ENCODE measurements at regions of chr16 and their contacts with region 1.

Region 1: DNA sequence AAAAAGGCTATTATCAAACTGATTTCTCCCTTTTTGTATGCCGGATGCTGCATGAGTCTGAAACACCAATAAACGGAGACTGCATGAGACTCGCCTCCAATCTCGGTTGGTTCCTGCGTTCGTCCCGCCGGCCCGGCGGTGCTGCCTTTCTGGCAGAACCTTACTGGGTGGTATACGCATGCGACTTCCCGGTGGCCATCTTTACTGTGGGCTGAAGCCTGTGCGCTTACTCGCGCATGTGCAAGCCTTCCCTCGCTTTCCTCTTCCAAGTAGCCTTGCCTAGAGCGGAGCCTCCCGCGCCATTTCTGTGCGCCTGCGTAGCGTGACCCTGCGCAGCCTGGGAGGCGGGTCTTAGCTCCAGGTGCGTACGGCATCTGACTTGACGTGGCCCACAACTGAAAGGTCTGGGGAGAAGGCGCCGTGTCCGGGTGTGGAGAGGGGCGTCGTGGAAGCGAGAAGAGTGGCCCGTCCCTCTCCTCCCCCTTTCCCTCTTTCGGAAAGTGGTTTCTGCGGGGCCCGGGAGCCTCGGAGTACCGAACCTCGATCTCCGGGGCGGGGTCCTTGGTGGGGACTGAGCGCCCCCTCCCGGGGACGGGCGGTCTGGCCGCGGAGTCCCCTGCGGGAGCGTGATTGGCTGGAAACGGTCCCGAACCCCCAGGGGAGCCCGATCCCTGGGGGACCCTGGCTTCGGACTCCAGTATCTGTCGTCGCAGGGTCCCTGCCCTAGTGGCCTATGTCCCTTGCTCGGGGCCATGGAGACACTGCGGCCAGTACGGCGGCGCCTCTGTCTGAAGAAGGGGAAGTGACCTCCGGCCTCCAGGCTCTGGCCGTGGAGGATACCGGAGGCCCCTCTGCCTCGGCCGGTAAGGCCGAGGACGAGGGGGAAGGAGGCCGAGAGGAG is at the start of gene PAGR1:
- DNase-seq: peak; percentile 97
- ATAC-seq: peak; percentile 74
- H3K4me3 Mint-ChIP-seq: peak within 1 kb of the TSS; percentile 99
- H3K27ac Mint-ChIP-seq: peak within 1 kb of the TSS; percentile 99
- H3K4me1 Mint-ChIP-seq: peaks cover 71% of the 10 kb centered on the region
- H3K27me3 Mint-ChIP-seq: no peaks in the 10 kb centered on the region
- CTCF ChIP-seq: peak; percentile 89
- total RNA-seq, gene PAGR1: 18.6 and 20.3 TPM in 2 replicates

Region 2: DNA sequence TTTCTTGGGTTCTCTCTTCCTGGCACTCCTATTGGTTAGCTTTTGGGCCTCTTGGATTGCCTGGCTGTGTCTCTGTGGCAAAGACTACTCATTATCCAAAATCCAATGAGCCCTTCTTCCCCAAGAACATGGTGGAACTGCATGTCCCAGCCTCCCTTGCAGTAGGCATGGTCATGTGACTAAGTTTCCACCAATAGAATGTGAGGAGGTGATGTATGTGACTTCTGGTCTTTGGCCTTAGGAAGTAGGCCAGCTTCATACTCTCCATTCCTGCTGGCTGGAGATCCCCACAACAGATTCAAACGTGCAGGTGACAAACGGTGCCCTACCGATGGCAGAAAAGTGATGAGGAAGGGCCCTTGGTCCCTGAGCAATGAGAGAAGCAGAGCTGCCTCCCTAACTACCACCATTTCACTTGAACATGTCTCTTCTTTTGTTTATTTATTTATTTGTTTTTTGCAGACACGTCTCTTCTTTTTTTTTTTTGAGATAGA is 170.3 kb before region 1 on chr16:
- CTCF ChIA-PET with region 1: no interaction called
- POLR2A ChIA-PET with region 1: interaction called, 10 read pairs
- intact Hi-C with region 1: no loop called
- DNase-seq: no peak
- ATAC-seq: peak; percentile 42
- H3K4me3 Mint-ChIP-seq: peak overlapping the region; percentile 69
- H3K27ac Mint-ChIP-seq: peak overlapping the region; percentile 92
- H3K4me1 Mint-ChIP-seq: peaks cover 42% of the 10 kb centered on the region
- H3K27me3 Mint-ChIP-seq: no peaks in the 10 kb centered on the region
- CTCF ChIP-seq: no peak

Region 3: GRCh38 chr16:29700253-29700987 is 115.6 kb before region 1 on chr16:
- CTCF ChIA-PET with region 1: interaction called, 10 read pairs
- POLR2A ChIA-PET with region 1: interaction called, 11 read pairs
- intact Hi-C with region 1: loop called (anchors 1 kb)
- DNase-seq: peak; percentile 54
- ATAC-seq: no peak
- H3K4me3 Mint-ChIP-seq: no peak overlapping the region
- H3K27ac Mint-ChIP-seq: peak overlapping the region; percentile 50
- H3K4me1 Mint-ChIP-seq: peaks cover 37% of the 10 kb centered on the region
- H3K27me3 Mint-ChIP-seq: no peaks in the 10 kb centered on the region
- CTCF ChIP-seq: no peak

Region 4: DNA sequence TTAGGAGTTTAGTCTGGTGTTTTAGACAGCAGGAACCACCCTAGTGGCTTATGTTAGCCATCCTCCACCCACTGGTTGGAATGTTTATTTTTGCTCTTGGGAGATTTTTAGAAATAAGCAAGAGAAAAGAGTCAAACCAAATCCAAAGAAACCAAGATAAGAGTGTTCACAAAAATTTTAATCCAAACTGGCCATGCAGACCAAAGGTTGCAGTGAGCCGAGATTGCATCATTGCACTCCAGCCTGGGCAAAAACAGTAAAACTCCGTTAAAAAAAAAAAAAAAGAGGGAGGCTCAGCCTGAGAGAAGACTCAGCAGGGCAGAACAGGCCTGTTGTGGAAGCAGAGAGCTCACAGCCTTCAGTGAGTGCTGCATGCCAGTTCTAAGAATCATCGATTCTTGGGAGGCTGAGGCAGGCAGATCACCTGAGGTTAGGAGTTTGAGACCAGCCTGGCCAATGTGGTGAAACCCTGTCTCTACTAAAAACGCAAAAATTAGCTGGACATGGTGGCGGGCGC is 58.0 kb before region 1 on chr16:
- CTCF ChIA-PET with region 1: no interaction called
- POLR2A ChIA-PET with region 1: no interaction called
- intact Hi-C with region 1: no loop called
- DNase-seq: no peak
- ATAC-seq: no peak
- H3K4me3 Mint-ChIP-seq: no peak overlapping the region
- H3K27ac Mint-ChIP-seq: no peak overlapping the region
- H3K4me1 Mint-ChIP-seq: peaks cover 27% of the 10 kb centered on the region
- H3K27me3 Mint-ChIP-seq: no peaks in the 10 kb centered on the region
- CTCF ChIP-seq: no peak

Region 5: GRCh38 chr16:29777576-29778300 is 38.3 kb before region 1 on chr16 and contains the start of gene ZG16:
- CTCF ChIA-PET with region 1: no interaction called
- POLR2A ChIA-PET with region 1: no interaction called
- intact Hi-C with region 1: no loop called
- DNase-seq: no peak
- ATAC-seq: no peak
- H3K4me3 Mint-ChIP-seq: no peak within 1 kb of the TSS
- H3K27ac Mint-ChIP-seq: no peak within 1 kb of the TSS
- H3K4me1 Mint-ChIP-seq: no peaks in the 10 kb centered on the region
- H3K27me3 Mint-ChIP-seq: no peaks in the 10 kb centered on the region
- CTCF ChIP-seq: no peak
- total RNA-seq, gene ZG16: not detected in 2 replicates

Region 6: DNA sequence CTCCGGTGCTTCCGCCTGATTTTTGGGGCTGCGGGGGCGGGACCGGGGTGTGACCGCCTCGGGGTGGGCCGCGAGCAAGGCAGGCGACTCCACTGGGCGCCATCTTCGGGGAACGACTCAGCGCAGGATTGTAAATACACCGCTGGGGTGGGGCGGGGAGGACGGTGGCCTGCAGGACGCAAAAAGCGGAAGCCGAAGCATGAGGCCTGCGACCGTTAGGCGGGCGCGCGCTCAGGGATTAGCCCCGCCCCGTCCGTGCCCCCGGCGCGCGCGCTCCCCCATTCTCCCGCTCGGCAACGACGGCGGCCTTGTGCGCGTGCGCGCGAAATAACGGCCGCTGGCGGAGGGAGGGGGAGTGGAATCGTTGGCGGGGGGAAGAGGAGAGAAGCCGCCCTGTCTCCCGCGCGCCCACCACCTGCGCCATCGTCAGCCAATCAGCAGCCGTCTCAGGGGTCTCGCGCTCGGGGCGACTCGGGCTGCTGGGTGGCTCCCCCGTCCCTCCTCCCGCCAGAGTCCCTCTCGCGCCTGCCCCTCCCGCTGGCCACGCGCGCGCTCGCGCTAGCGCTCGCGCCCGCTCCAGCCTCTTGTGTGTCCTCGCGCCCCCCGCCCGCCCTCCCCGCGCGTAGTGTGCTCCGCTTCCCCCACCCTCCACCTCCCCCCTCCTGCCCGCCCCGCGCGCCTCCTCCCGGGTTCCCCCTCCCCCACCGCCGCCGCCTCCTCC is 10.5 kb before region 1 on chr16:
- CTCF ChIA-PET with region 1: interaction called, 23 read pairs
- POLR2A ChIA-PET with region 1: interaction called, 147 read pairs
- intact Hi-C with region 1: loop called (anchors 1 kb)
- DNase-seq: peak; percentile 96
- ATAC-seq: peak; percentile 70
- H3K4me3 Mint-ChIP-seq: peak overlapping the region; percentile 100
- H3K27ac Mint-ChIP-seq: peak overlapping the region; percentile 100
- H3K4me1 Mint-ChIP-seq: peaks cover 45% of the 10 kb centered on the region
- H3K27me3 Mint-ChIP-seq: no peaks in the 10 kb centered on the region
- CTCF ChIP-seq: no peak

Region 7: GRCh38 chr16:29973384-29974246 is 157.6 kb after region 1 on chr16 and contains the start of gene TAOK2:
- CTCF ChIA-PET with region 1: no interaction called
- POLR2A ChIA-PET with region 1: interaction called, 5 read pairs
- intact Hi-C with region 1: loop called (anchors 1 kb)
- DNase-seq: peak; percentile 95
- ATAC-seq: peak; percentile 99
- H3K4me3 Mint-ChIP-seq: peak within 1 kb of the TSS; percentile 96
- H3K27ac Mint-ChIP-seq: peak within 1 kb of the TSS; percentile 90
- H3K4me1 Mint-ChIP-seq: peaks cover 39% of the 10 kb centered on the region
- H3K27me3 Mint-ChIP-seq: no peaks in the 10 kb centered on the region
- CTCF ChIP-seq: no peak
- total RNA-seq, gene TAOK2: 30.5 and 36.1 TPM in 2 replicates

Region 8: DNA sequence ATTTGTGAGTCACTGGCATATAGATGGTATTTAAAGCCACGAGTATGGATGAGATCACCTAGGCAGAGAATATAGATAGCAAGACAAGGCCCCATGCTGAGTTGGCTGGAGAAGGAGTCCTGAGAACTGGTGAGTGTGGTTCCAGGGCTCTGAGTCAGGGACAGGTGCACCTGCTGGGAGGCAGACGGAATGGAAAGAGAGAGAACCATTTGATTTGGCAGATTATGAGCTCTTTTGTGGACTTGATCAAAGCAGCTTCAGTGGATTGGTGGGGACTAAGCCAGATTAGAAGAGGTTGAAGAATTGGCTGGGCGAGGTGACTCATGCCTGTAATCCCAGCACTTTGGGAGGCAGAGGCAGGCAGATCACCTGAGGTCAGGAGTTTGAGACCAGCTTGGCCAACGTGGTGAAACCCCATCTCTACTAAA is 202.7 kb after region 1 on chr16:
- CTCF ChIA-PET with region 1: no interaction called
- POLR2A ChIA-PET with region 1: no interaction called
- intact Hi-C with region 1: loop called (anchors 2 kb)
- DNase-seq: no peak
- ATAC-seq: no peak
- H3K4me3 Mint-ChIP-seq: no peak overlapping the region
- H3K27ac Mint-ChIP-seq: no peak overlapping the region
- H3K4me1 Mint-ChIP-seq: peaks cover 11% of the 10 kb centered on the region
- H3K27me3 Mint-ChIP-seq: no peaks in the 10 kb centered on the region
- CTCF ChIP-seq: no peak

Measured in activated B cell treated with CpG ODN at 0.5 μM for 24 hours (primary cell).